ENCODE measurements at regions of chr6 and their contacts with region 1.

Region 1: GRCh38 chr6:137589067-137589848 is 95.1 kb upstream of the OLIG3 start:
- DNase-seq: peak; percentile 38 to 65
- H3K4me3 ChIP-seq: no peak overlapping the region
- H3K27ac ChIP-seq: no peak overlapping the region
- H3K4me1 ChIP-seq: peaks cover 0 to 6% (median 5%) of the 10 kb centered on the region in 4 experiments; a peak in 4 of 7 replicates
- H3K27me3 ChIP-seq: no peaks in the 10 kb centered on the region; a peak in 1 of 7 replicates
- CTCF ChIP-seq: peak; percentile 55 to 100 (median 99)
- EP300 ChIP-seq: peak in 1 of 2 experiments; percentile 75; a peak in 1 of 3 replicates
- POLR2A ChIP-seq: no peak
- RAD21 ChIP-seq: peak; percentile 95 to 97

Region 2: GRCh38 chr6:137313928-137314855 is 275.1 kb before region 1 on chr6:
- CTCF ChIA-PET with region 1: interaction called, 13 read pairs
- POLR2A ChIA-PET with region 1: no interaction called
- DNase-seq: peak in 1 of 2 experiments; percentile 55
- H3K4me3 ChIP-seq: no peak overlapping the region
- H3K27ac ChIP-seq: no peak overlapping the region
- H3K4me1 ChIP-seq: peaks cover 0 to 3% (median 2%) of the 10 kb centered on the region in 4 experiments; a peak in 3 of 7 replicates
- H3K27me3 ChIP-seq: no peaks in the 10 kb centered on the region
- CTCF ChIP-seq: peak; percentile 71 to 81 (median 73)
- EP300 ChIP-seq: no peak
- POLR2A ChIP-seq: no peak
- RAD21 ChIP-seq: peak; percentile 88 to 91

Region 3: DNA sequence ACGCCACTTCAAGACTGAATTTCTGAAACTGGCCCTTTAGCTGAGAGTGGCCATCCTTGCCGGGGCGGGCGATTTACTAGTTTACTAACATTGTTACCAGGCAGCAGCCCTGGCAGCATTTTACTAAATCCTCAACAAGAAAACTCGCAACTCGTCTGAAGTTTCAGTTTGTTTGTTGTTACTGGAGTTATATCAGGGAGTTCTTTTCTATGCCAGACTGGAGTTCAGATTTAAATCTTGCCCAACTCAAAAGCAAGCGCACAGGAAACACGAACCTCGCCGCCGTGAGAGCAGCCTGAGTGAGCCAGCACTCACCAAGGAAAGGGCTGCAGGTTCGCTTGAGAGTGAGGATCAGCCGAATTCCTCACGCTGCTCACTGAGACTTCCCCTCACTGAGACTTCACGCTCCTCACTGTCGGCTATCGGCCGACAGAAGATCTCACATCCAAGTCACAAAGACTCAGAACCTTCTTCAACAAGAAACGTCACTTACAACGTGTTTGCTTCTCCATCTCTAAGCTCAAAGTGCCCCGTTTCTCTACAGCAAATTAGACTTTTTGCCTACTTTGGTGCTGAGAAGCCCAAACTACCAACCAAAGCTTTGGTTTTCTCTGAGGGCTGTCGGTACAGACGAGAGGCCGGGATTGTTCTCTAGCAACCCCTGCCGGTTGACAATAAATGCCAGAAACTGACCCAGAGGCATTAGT is 174.0 kb before region 1 on chr6:
- CTCF ChIA-PET with region 1: interaction called, 17 read pairs
- POLR2A ChIA-PET with region 1: no interaction called
- DNase-seq: peak in 1 of 2 experiments; percentile 60
- H3K4me3 ChIP-seq: peak overlapping the region; percentile 16 to 54 (median 24); a peak in 7 of 8 replicates
- H3K27ac ChIP-seq: no peak overlapping the region
- H3K4me1 ChIP-seq: peaks cover 4 to 18% (median 14%) of the 10 kb centered on the region in 4 experiments; a peak in 6 of 7 replicates
- H3K27me3 ChIP-seq: peaks cover 0 to 2% (median 0%) of the 10 kb centered on the region in 4 experiments; a peak in 1 of 7 replicates
- CTCF ChIP-seq: peak; percentile 47 to 75 (median 72)
- EP300 ChIP-seq: no peak
- POLR2A ChIP-seq: no peak
- RAD21 ChIP-seq: peak; percentile 60 to 74

Region 4: GRCh38 chr6:137480431-137480830 is 108.8 kb before region 1 on chr6:
- CTCF ChIA-PET with region 1: interaction called, 62 read pairs
- POLR2A ChIA-PET with region 1: no interaction called
- DNase-seq: no peak
- H3K4me3 ChIP-seq: no peak overlapping the region
- H3K27ac ChIP-seq: no peak overlapping the region
- H3K4me1 ChIP-seq: no peaks in the 10 kb centered on the region
- H3K27me3 ChIP-seq: peaks cover 3 to 6% (median 4%) of the 10 kb centered on the region in 4 experiments; a peak in 5 of 7 replicates
- CTCF ChIP-seq: no peak
- EP300 ChIP-seq: no peak
- POLR2A ChIP-seq: no peak
- RAD21 ChIP-seq: no peak

Region 5: GRCh38 chr6:137512757-137513605 is 76.3 kb before region 1 on chr6:
- CTCF ChIA-PET with region 1: interaction called, 35 read pairs
- POLR2A ChIA-PET with region 1: no interaction called
- DNase-seq: peak in 1 of 2 experiments; percentile 62
- H3K4me3 ChIP-seq: peak overlapping the region in 2 of 4 experiments; percentile 6 to 25; a peak in 3 of 8 replicates
- H3K27ac ChIP-seq: no peak overlapping the region
- H3K4me1 ChIP-seq: peaks cover 3 to 12% (median 8%) of the 10 kb centered on the region in 4 experiments; a peak in 3 of 7 replicates
- H3K27me3 ChIP-seq: peaks cover 0 to 3% (median 0%) of the 10 kb centered on the region in 4 experiments; a peak in 3 of 7 replicates
- CTCF ChIP-seq: no peak
- EP300 ChIP-seq: no peak
- POLR2A ChIP-seq: no peak
- RAD21 ChIP-seq: no peak

Region 6: DNA sequence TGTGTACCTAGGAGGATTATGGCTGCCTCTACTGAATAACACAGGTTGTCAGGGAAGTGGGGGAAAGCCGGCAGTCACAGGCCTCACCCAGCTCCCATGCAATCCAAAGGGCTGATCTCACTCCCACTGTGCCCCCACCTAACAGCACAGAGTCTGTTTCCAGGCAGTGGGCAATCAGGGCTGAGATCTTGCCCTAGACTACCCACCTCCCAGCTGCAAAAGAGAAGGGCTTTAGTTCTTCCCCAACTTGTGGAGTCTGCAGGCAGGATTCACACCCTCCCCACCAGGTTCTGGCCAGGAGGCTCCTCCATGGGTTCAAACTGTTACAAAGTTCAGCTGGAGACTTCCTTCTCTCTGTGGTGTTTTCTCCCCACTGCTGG is 29.1 kb before region 1 on chr6:
- CTCF ChIA-PET with region 1: interaction called, 38 read pairs
- POLR2A ChIA-PET with region 1: no interaction called
- DNase-seq: no peak
- H3K4me3 ChIP-seq: no peak overlapping the region
- H3K27ac ChIP-seq: no peak overlapping the region
- H3K4me1 ChIP-seq: no peaks in the 10 kb centered on the region
- H3K27me3 ChIP-seq: no peaks in the 10 kb centered on the region
- CTCF ChIP-seq: no peak
- EP300 ChIP-seq: no peak
- POLR2A ChIP-seq: no peak
- RAD21 ChIP-seq: no peak

Region 7: DNA sequence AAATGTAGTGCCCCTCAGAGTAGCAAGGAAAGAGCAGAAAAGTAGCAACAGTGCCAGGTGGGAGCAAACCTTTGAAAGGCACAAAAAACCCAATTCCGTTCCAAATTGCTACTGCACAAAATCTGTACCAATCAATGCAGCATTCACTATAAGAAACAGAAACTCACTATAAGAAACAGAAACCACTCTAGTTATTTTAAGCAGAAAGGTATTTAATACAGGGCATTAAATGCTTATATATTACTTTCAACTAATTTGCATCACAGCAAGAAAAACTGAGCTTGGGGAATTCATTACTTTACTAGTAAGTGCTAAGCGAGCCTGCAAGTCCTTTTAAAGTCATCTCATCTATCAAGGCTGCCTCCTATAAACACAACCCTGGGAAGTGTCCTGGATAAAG is 21.4 kb after region 1 on chr6:
- CTCF ChIA-PET with region 1: interaction called, 24 read pairs
- POLR2A ChIA-PET with region 1: no interaction called
- DNase-seq: no peak
- H3K4me3 ChIP-seq: no peak overlapping the region
- H3K27ac ChIP-seq: no peak overlapping the region
- H3K4me1 ChIP-seq: peaks cover 0 to 15% (median 0%) of the 10 kb centered on the region in 4 experiments; a peak in 1 of 7 replicates
- H3K27me3 ChIP-seq: peaks cover 0 to 1% (median 0%) of the 10 kb centered on the region in 4 experiments; a peak in 2 of 7 replicates
- CTCF ChIP-seq: no peak
- EP300 ChIP-seq: no peak
- POLR2A ChIP-seq: no peak
- RAD21 ChIP-seq: no peak

Measured in H1 (cell line).